Activated CD8-positive, alpha-beta T cell treated with anti-CD3 and anti-CD28 coated beads for 36 hours (primary cell): ENCODE measurements at regions of chr11 and their contacts with region 1.

Region 1: GRCh38 chr11:10208131-10208575 is 85.9 kb downstream of the SBF2 start:
- DNase-seq: peak; percentile 7
- ATAC-seq: peak; percentile 80
- H3K4me3 Mint-ChIP-seq: no peak overlapping the region
- H3K27ac Mint-ChIP-seq: no peak overlapping the region
- H3K4me1 Mint-ChIP-seq: no peaks in the 10 kb centered on the region
- H3K27me3 Mint-ChIP-seq: peaks cover 3% of the 10 kb centered on the region
- CTCF ChIP-seq: peak; percentile 79

Region 2: DNA sequence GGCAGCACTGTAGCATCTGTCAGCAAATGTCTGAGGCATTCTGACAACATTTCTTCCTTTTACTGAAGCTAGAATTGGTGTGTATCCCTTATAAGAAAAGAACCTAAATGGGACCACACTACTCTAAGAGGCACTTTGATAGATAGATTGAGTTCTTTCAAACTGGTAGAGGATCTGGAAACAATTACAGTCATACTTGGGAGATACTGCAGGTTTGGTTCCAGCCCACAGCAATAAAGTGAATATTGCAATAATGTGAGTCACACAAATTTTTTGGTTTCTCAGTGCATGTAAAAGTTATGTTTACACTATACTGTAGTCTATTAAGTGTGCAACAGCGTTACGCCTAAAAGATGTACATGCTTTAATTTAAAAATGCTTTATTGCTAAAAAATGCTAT is 11.1 kb before region 1 on chr11:
- CTCF ChIA-PET with region 1: interaction called, 16 read pairs
- POLR2A ChIA-PET with region 1: interaction called, 3 read pairs
- intact Hi-C with region 1: no loop called
- DNase-seq: no peak
- ATAC-seq: no peak
- H3K4me3 Mint-ChIP-seq: no peak overlapping the region
- H3K27ac Mint-ChIP-seq: no peak overlapping the region
- H3K4me1 Mint-ChIP-seq: no peaks in the 10 kb centered on the region
- H3K27me3 Mint-ChIP-seq: no peaks in the 10 kb centered on the region
- CTCF ChIP-seq: no peak

Region 3: DNA sequence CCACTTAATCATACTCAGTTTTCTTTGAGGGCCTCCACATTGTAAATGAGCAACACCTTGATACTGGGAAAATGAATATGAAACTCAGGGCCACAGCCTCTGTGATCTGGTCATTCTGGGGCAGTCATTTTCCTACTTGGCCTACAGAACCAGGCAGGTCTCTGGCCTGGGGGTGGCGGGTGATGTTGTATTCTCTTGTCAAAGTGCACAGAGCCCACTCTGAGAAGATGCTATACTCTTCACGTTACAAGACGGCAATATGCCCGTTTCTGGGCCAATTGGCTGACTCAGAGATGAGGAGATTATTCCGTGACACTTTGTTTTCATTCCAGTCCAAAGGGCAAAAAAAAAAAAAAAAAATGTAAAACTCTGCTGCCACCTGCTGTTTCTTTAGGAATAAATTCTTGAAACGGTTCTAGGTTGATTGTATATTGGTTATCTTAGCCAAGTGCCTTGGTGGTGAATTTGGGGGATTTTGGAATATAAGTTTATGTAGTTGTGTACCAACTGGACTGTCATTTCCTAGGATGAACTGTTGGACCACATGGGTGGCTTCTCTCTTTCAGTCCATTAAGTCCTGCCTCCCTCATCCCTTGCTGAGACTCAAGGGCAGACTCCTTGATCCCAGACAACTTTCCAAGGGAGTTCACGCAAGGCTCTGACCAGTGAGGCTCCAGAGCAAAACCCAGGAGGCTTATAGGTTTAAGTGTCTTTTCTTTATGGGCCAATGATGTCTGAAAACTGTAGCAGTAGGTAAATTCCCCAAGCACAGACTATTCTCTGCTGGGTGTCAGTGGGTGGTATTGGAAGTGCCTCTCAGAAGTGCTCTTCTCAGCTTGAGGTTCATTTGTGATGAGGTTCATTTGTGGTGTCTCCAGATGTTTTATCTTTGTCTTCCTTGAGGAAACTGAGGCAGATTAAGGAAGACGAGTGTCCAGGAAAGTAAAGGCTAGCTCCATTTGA is 115.0 kb after region 1 on chr11:
- CTCF ChIA-PET with region 1: interaction called, 16 read pairs
- POLR2A ChIA-PET with region 1: no interaction called
- intact Hi-C with region 1: loop called (anchors 2 kb)
- DNase-seq: peak; percentile 73
- ATAC-seq: peak; percentile 78
- H3K4me3 Mint-ChIP-seq: peak overlapping the region; percentile 32
- H3K27ac Mint-ChIP-seq: peak overlapping the region; percentile 86
- H3K4me1 Mint-ChIP-seq: peaks cover 20% of the 10 kb centered on the region
- H3K27me3 Mint-ChIP-seq: peaks cover 7% of the 10 kb centered on the region
- CTCF ChIP-seq: peak; percentile 72